ENCODE measurements at regions of chr2 and their contacts with region 1.

Region 1: DNA sequence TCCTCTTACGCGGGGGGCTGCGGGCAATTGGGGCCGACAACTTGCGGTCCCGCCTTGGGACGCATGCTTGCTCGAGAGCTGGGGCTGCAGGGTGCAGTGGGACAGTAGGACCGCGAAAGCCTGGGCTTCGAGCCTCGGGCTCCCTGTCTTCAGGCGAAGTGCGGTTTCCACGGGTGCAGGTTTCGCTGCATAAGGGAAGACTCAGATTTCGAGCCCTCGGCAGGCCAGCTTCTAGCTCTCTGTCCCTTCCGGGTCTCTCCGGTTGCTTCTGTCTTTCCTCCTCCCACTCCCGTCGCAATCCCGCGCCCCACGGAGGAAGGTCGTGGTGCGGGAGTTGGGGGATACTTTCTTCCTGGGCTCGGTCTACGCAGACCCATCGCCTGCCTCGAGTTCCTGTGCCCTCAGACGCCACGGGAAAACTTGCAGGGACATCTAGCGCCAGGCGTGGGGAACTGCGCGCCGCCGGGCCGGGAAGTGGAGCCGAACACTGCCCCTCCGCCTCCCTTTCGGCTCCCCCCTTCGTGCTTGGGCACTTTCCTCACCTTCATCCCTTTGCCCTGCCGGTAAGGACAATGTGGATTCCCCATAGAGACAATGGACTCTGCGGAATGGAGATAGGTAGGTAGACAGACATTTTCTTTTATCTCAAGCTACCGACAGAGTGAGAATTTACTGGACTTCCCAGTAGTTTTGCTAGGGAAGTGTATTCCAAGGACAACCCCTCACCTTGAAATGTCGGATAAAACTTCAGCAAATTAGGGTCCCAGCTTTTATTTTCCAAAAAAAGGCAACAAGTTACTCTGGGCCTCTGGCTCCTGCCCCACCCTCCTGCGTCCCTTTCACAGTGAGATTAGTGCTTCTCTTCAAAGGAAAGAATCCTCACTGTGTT is 4.2 kb upstream of the HOXD13 start:
- DNase-seq: peak; percentile 66
- H3K4me3 ChIP-seq: peak overlapping the region; percentile 12
- H3K27ac ChIP-seq: no peak overlapping the region
- H3K4me1 ChIP-seq: peaks cover 13% of the 10 kb centered on the region
- H3K27me3 ChIP-seq: peaks cover 100% of the 10 kb centered on the region
- CTCF ChIP-seq: peak; percentile 71

Region 2: DNA sequence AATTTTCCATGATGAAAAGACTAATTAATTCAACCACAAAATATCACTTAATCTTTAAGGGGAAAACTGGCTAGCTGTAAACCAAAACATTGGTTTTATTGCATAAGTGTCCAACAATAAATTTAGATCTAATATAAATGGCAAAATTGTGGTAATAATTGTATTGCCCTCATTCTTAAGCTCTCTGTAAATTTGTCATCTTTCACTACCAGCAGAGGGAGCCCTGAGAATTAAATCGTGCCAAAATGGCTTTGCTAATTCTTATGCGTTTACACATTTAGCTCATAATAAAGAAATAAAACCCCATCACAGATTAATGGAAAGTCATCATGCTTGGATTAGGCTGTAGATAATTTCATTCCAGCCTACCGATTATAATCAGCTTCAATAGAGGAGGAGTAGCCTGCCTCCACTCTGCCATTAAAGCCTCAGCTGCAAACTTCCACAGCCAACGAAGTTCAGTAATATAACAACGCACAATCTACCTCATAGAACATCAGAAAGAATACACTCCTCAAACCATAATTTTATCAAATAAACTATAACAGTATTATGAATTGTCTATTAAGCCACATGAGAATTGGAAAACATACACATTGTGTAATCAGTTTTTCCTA is 836.8 kb before region 1 on chr2:
- intact Hi-C with region 1: loop called (anchors 5 kb)
- DNase-seq: peak; percentile 19
- H3K4me3 ChIP-seq: no peak overlapping the region
- H3K27ac ChIP-seq: no peak overlapping the region
- H3K4me1 ChIP-seq: no peaks in the 10 kb centered on the region
- H3K27me3 ChIP-seq: no peaks in the 10 kb centered on the region
- CTCF ChIP-seq: peak; percentile 51

Region 3: GRCh38 chr2:175366815-175367214 is 721.5 kb before region 1 on chr2:
- intact Hi-C with region 1: loop called (anchors 2 kb)
- DNase-seq: peak; percentile 22
- H3K4me3 ChIP-seq: no peak overlapping the region
- H3K27ac ChIP-seq: no peak overlapping the region
- H3K4me1 ChIP-seq: no peaks in the 10 kb centered on the region
- H3K27me3 ChIP-seq: no peaks in the 10 kb centered on the region
- CTCF ChIP-seq: peak; percentile 63

Region 4: GRCh38 chr2:175687465-175687864 is 400.8 kb before region 1 on chr2:
- intact Hi-C with region 1: loop called (anchors 5 kb)
- DNase-seq: no peak
- H3K4me3 ChIP-seq: no peak overlapping the region
- H3K27ac ChIP-seq: no peak overlapping the region
- H3K4me1 ChIP-seq: no peaks in the 10 kb centered on the region
- H3K27me3 ChIP-seq: no peaks in the 10 kb centered on the region
- CTCF ChIP-seq: no peak

Region 5: GRCh38 chr2:175726223-175726622 is 362.1 kb before region 1 on chr2:
- intact Hi-C with region 1: no loop called
- DNase-seq: no peak
- H3K4me3 ChIP-seq: no peak overlapping the region
- H3K27ac ChIP-seq: no peak overlapping the region
- H3K4me1 ChIP-seq: no peaks in the 10 kb centered on the region
- H3K27me3 ChIP-seq: no peaks in the 10 kb centered on the region
- CTCF ChIP-seq: no peak